Esophagus muscularis mucosa (tissue), 4 donors: ENCODE measurements at regions of chr19 and their contacts with region 1.

Region 1: GRCh38 chr19:16324384-16325160 is at the start of gene KLF2:
- DNase-seq: peak; percentile 97
- H3K4me3 ChIP-seq: peak within 1 kb of the TSS; percentile 78 to 98 (median 84)
- H3K27ac ChIP-seq: peak within 1 kb of the TSS; percentile 97 to 99 (median 98)
- H3K4me1 ChIP-seq: peaks cover 18 to 44% (median 41%) of the 10 kb centered on the region in 4 donors
- H3K27me3 ChIP-seq: peaks cover 0 to 6% (median 0%) of the 10 kb centered on the region in 4 donors
- CTCF ChIP-seq: peak in 1 of 3 experiments; percentile 8
- EP300 ChIP-seq: no peak
- POLR2A ChIP-seq: peak; percentile 91
- total RNA-seq, gene KLF2: 64.9 to 74.1 (median 68.5) TPM

Region 2: GRCh38 chr19:16283210-16284061 is 41.1 kb before region 1 on chr19:
- intact Hi-C with region 1: loop called (anchors 5 kb)
- DNase-seq: peak; percentile 98
- H3K4me3 ChIP-seq: peak overlapping the region; percentile 34 to 46 (median 44)
- H3K27ac ChIP-seq: peak overlapping the region; percentile 94 to 98 (median 98)
- H3K4me1 ChIP-seq: peaks cover 59 to 89% (median 73%) of the 10 kb centered on the region in 4 donors
- H3K27me3 ChIP-seq: no peaks in the 10 kb centered on the region
- CTCF ChIP-seq: no peak
- EP300 ChIP-seq: peak; percentile 80
- POLR2A ChIP-seq: peak; percentile 60